Tibial artery (tissue), 4 donors: ENCODE measurements at regions of chr18 and their contacts with region 1.

Region 1: DNA sequence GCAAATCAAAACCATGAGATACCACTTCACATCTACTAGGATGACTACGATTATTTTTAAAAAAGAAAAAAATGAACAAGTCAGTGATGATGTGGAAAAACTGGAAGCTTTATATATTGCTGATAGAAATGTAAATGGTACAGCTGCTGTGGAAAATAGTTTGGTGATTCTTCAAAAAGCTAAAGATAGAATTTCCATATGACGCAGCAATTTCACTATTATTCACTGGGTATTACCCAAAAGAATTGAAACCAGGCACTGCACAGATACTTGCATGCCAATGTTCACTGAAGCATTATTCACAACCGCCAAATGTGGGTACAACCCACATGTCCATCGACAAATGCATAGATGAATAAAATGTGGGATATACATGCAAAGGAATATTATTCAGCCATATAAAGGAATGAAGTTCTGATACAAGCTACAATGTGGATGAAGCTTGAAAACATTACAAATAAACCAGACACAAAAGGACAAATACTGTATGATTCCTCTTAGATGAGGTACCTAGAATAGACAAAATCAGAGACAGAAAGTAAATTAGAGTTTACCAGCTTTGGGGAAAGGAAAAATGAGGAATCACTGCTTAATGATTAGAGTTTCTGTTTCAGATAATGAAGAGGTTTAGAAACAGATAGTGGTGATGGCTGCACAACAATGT is 11.1 kb downstream of the RTTN start:
- DNase-seq: no peak
- H3K4me3 ChIP-seq: no peak overlapping the region
- H3K27ac ChIP-seq: no peak overlapping the region
- H3K4me1 ChIP-seq: peaks cover 0 to 13% (median 0%) of the 10 kb centered on the region in 4 donors
- H3K27me3 ChIP-seq: no peaks in the 10 kb centered on the region
- CTCF ChIP-seq: no peak

Region 2: DNA sequence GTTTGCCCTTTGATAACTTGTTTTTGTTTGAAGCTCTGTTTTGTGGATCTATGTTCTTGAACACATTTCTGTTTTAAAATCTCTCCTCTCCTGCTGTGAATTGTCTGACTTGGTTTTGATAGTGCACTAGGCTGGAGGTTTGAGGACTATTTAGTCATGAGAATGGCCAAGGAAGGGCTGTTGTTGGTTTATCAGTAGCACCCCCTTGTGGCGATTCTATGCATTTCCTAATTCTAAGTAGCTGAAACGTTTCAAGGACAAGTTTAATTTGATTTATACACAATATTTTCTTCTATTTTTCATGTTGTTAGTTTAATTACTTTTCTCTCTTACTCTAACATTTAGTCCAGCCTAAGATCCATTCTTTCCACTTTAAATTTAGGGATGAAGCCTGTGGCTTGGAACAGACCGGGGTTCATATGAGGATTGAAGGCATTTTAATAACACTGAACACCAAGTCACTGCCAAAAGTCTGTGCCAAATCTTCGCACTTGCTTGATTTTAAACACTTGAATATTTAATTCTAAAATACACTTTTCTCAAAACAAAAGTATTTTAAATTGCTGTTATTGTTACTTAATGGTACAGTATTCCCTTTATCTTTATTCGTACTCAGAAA is 260.5 kb after region 1 on chr18:
- intact Hi-C with region 1: loop called (anchors 5 kb)
- DNase-seq: no peak
- H3K4me3 ChIP-seq: no peak overlapping the region
- H3K27ac ChIP-seq: no peak overlapping the region
- H3K4me1 ChIP-seq: peaks cover 0 to 2% (median 0%) of the 10 kb centered on the region in 4 donors
- H3K27me3 ChIP-seq: peaks cover 0 to 23% of the 10 kb centered on the region in 2 donors
- CTCF ChIP-seq: peak; percentile 60 to 72